GM12878 (cell line): ENCODE measurements at regions of chr2 and their contacts with region 1.

Region 1: GRCh38 chr2:15577071-15577735 is 14.5 kb upstream of the DDX1 start:
- DNase-seq: peak; percentile 38
- ATAC-seq: peak; percentile 99
- H3K4me3 ChIP-seq: no peak overlapping the region
- H3K27ac ChIP-seq: no peak overlapping the region
- H3K4me1 ChIP-seq: 0 out of 2 replicates have a peak, but pooled peaks cover 3% of the 10 kb centered on the region
- H3K27me3 ChIP-seq: no peaks in the 10 kb centered on the region
- CTCF ChIP-seq: peak; percentile 85 to 91 (median 87)
- EP300 ChIP-seq: no peak
- POLR2A ChIP-seq: no peak
- RAD21 ChIP-seq: peak; percentile 95

Region 2: GRCh38 chr2:15159751-15160177 is 417.4 kb before region 1 on chr2:
- CTCF ChIA-PET with region 1: interaction called, 5 read pairs
- POLR2A ChIA-PET with region 1: no interaction called
- RAD21 ChIA-PET with region 1: interaction called, 4 read pairs
- SMC1A ChIA-PET with region 1: no interaction called
- in situ Hi-C with region 1: no loop called
- intact Hi-C with region 1: loop called (anchors 10 kb)
- DNase-seq: no peak
- ATAC-seq: peak; percentile 61
- H3K4me3 ChIP-seq: no peak overlapping the region
- H3K27ac ChIP-seq: no peak overlapping the region
- H3K4me1 ChIP-seq: no peaks in the 10 kb centered on the region
- H3K27me3 ChIP-seq: no peaks in the 10 kb centered on the region
- CTCF ChIP-seq: peak; percentile 56 to 64 (median 62)
- EP300 ChIP-seq: no peak
- POLR2A ChIP-seq: no peak
- RAD21 ChIP-seq: peak; percentile 65

Region 3: GRCh38 chr2:15560988-15561573 is 16.1 kb before region 1 on chr2 and contains the start of gene NBAS:
- CTCF ChIA-PET with region 1: interaction called, 26 read pairs
- POLR2A ChIA-PET with region 1: no interaction called
- RAD21 ChIA-PET with region 1: no interaction called
- SMC1A ChIA-PET with region 1: interaction called, 4 read pairs
- in situ Hi-C with region 1: no loop called
- intact Hi-C with region 1: no loop called
- DNase-seq: peak; percentile 37
- ATAC-seq: peak; percentile 89
- H3K4me3 ChIP-seq: peak within 1 kb of the TSS; percentile 99
- H3K27ac ChIP-seq: peak within 1 kb of the TSS; percentile 45
- H3K4me1 ChIP-seq: 0 out of 2 replicates have a peak, but pooled peaks cover 3% of the 10 kb centered on the region
- H3K27me3 ChIP-seq: no peaks in the 10 kb centered on the region
- CTCF ChIP-seq: no peak
- EP300 ChIP-seq: no peak
- POLR2A ChIP-seq: peak; percentile 83
- RAD21 ChIP-seq: no peak
- polyA plus RNA-seq, gene NBAS: 4.3 to 8.5 TPM

Region 4: DNA sequence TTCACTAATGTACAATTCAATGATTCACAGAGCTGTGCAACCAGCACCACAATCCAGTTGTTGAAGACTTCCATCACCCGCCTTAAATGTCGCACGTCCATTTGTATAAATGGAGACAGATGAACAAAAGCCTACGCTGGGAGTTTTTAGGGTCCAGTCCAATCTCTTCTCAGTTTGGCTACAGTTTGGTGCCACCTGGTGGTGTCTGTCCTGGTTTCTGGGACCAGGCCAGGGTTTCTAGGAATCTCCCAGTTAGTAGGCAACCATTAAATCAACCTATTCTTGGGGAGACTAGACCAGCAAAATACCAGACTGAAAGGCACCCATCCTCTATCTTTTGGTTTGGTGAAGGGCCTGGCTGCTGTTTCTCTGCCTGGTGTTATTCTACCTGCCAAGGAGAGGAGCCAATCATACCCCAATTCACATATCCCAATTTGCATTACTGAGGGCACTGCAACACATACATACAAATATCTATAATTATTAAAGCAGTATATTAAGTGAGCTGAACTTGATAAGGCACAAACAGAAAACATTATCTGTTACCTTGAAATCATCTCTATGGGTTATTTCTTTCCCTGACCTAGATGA is 11.2 kb after region 1 on chr2:
- CTCF ChIA-PET with region 1: interaction called, 20 read pairs
- POLR2A ChIA-PET with region 1: no interaction called
- RAD21 ChIA-PET with region 1: no interaction called
- SMC1A ChIA-PET with region 1: interaction called, 19 read pairs
- in situ Hi-C with region 1: no loop called
- intact Hi-C with region 1: no loop called
- DNase-seq: no peak
- ATAC-seq: no peak
- H3K4me3 ChIP-seq: no peak overlapping the region
- H3K27ac ChIP-seq: no peak overlapping the region
- H3K4me1 ChIP-seq: no peaks in the 10 kb centered on the region; the same call in none of the 2 replicates
- H3K27me3 ChIP-seq: no peaks in the 10 kb centered on the region
- CTCF ChIP-seq: peak; percentile 40 to 52 (median 44)
- EP300 ChIP-seq: no peak
- POLR2A ChIP-seq: no peak
- RAD21 ChIP-seq: peak; percentile 56